CD14-positive monocyte (primary cell): ENCODE measurements at regions of chr16 and their contacts with region 1.

Region 1: DNA sequence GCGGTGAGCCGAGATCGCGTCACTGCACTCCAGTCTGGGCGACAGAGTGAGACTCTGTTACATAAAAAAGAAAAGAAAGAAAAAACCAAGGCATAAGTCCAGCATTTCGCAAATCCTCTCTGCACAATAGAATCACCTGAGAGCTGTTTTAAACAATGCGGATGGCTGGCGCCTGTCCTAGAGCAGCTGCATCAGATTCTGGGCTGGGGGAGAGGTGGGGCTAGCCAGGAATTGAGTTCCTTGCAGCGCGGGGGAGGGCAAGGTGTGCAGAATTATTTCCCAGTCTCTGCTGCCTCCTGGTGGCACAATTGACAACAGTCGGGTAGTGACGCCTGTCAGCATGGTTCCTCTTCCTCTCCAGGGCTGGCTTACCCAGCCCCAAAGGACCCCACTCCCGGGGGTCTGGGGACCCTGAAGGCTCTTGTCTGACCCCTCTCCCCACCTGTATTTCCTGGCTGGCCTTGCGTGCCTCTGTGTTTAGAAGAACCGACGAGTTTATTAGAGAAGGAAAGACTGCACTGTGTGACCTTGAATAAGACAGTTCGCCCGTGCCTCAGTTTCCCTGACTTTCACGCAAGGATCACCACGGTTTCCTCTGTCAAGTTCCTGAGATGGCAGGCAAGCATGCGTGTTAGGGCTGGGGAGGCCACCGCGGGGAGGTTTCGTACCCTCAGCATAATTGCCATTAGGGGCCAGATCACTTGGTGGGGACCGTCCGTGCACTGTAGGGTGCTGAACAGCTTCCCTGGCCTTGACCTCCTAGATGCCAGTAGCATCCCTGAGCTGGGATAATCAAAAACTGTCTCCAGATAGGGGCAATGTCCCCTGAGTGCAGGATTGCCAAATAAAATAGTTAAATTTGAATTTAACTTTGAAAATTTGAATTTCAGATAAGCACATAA is 41.0 kb upstream of the PLCG2 start:
- DNase-seq: peak; percentile 68 to 83 (median 79)
- H3K4me3 ChIP-seq: peak overlapping the region; percentile 25 to 76 (median 30)
- H3K4me3 Mint-ChIP-seq: peak overlapping the region; percentile 72 to 88
- H3K27ac ChIP-seq: peak overlapping the region; percentile 50 to 72
- H3K27ac Mint-ChIP-seq: peak overlapping the region; percentile 78 to 91 (median 88)
- H3K4me1 ChIP-seq: peaks cover 35 to 38% of the 10 kb centered on the region in 2 donors
- H3K4me1 Mint-ChIP-seq: peaks cover 40% of the 10 kb centered on the region
- H3K27me3 ChIP-seq: no peaks in the 10 kb centered on the region
- H3K27me3 Mint-ChIP-seq: peaks cover 0 to 3% (median 1%) of the 10 kb centered on the region in 3 donors
- CTCF ChIP-seq: peak; percentile 94

Region 2: DNA sequence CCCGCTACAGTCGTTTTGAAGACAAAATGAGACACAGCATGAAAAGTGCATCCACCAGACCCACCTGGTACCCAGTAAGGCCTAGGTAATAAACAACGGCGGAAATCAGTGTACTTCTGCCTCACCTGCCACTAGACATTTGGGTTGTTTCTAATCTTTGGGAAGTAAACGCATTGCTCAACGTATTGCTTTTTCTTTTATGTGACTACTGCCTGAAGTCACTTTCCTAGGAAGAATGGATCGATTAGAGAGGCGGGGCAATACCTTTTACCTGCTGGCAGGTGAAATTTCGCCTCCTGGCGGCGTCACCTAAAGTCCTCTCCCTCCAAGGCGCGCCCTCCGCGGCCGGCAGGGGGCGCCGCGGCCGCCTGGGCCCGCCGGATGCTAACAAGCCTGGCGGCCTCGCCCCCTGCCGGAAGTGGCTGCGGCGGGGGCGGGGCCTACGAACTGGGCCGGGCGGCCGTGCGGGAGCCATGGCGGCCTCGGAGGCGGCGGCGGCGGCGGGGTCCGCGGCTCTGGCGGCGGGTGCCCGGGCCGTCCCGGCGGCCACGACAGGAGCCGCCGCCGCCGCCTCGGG is 702.6 kb before region 1 on chr16 and contains the start of gene ATMIN:
- intact Hi-C with region 1: loop called in 1 of 2 experiments (anchors 10 kb)
- DNase-seq: peak; percentile 72 to 87 (median 84)
- H3K4me3 ChIP-seq: peak within 1 kb of the TSS; percentile 49 to 84 (median 73)
- H3K4me3 Mint-ChIP-seq: peak within 1 kb of the TSS; percentile 82 to 88
- H3K27ac ChIP-seq: peak within 1 kb of the TSS in 1 of 2 donors; percentile 50
- H3K27ac Mint-ChIP-seq: peak within 1 kb of the TSS in 6 of 7 donors; percentile 56 to 70 (median 62)
- H3K4me1 ChIP-seq: peaks cover 14% of the 10 kb centered on the region in 2 donors
- H3K4me1 Mint-ChIP-seq: peaks cover 23% of the 10 kb centered on the region
- H3K27me3 ChIP-seq: no peaks in the 10 kb centered on the region
- H3K27me3 Mint-ChIP-seq: no peaks in the 10 kb centered on the region
- CTCF ChIP-seq: peak; percentile 95
- polyA plus RNA-seq, gene ATMIN: 10.9 to 17.6 (median 13.2) TPM

Region 3: DNA sequence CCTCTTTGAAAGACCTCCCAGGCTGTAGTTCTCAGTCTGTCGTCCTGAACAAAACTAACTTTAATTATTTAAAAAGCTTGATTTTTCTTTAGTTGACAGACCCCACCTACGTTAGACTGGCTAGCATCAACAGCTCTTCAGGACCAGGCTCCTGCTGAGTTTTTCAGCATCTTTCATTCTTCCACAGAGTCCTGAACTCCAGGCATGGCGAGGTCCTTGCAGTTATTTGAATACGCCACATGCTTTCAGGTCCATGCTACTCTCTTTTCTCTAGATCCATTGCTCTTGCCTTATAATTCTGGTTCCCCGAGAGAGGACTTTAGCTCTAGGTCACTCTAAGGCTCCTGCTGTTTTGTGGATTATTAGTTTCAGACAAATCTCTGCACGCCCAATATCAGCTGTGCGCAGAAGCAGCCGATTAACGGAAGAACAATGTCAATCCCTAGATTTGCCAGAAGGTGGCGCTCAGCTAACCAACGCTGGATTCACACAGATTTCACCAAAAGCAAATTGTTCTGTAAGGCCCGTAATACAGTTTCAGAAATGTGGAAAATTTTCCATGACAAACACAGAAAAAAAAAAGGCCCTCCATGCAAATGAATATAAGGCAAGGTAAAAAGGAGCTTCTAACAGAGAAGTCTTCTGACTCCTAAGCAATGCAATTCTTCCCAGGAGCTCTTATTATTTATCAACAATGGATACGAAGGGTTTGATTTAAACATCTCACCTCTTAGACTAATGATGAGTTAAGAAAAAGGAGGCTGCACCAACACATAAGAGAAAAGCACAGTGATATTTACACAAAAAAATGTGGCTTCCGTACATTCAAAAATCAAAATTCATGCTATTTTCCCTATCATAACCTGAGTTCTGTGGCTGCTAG is 533.1 kb before region 1 on chr16:
- intact Hi-C with region 1: loop called (anchors 5 to 10 kb)
- DNase-seq: peak; percentile 7 to 29 (median 18)
- H3K4me3 ChIP-seq: no peak overlapping the region
- H3K4me3 Mint-ChIP-seq: no peak overlapping the region
- H3K27ac ChIP-seq: no peak overlapping the region
- H3K27ac Mint-ChIP-seq: no peak overlapping the region
- H3K4me1 ChIP-seq: no peaks in the 10 kb centered on the region
- H3K4me1 Mint-ChIP-seq: no peaks in the 10 kb centered on the region
- H3K27me3 ChIP-seq: no peaks in the 10 kb centered on the region
- H3K27me3 Mint-ChIP-seq: peaks cover 3 to 14% (median 7%) of the 10 kb centered on the region in 3 donors
- CTCF ChIP-seq: peak; percentile 78

Region 4: GRCh38 chr16:81623363-81624102 is 114.6 kb before region 1 on chr16:
- intact Hi-C with region 1: loop called (anchors 5 to 10 kb)
- DNase-seq: peak; percentile 31 to 49 (median 48)
- H3K4me3 ChIP-seq: no peak overlapping the region
- H3K4me3 Mint-ChIP-seq: no peak overlapping the region
- H3K27ac ChIP-seq: peak overlapping the region in 1 of 2 donors; percentile 38
- H3K27ac Mint-ChIP-seq: peak overlapping the region in 4 of 7 donors; percentile 30 to 75 (median 60)
- H3K4me1 ChIP-seq: no peaks in the 10 kb centered on the region
- H3K4me1 Mint-ChIP-seq: peaks cover 1% of the 10 kb centered on the region
- H3K27me3 ChIP-seq: no peaks in the 10 kb centered on the region
- H3K27me3 Mint-ChIP-seq: peaks cover 0 to 2% (median 0%) of the 10 kb centered on the region in 3 donors
- CTCF ChIP-seq: peak; percentile 66

Region 5: GRCh38 chr16:81723098-81723723 is 14.9 kb before region 1 on chr16:
- intact Hi-C with region 1: no loop called
- DNase-seq: peak; percentile 57 to 71 (median 67)
- H3K4me3 ChIP-seq: no peak overlapping the region
- H3K4me3 Mint-ChIP-seq: no peak overlapping the region
- H3K27ac ChIP-seq: no peak overlapping the region
- H3K27ac Mint-ChIP-seq: no peak overlapping the region
- H3K4me1 ChIP-seq: peaks cover 10% of the 10 kb centered on the region in 2 donors
- H3K4me1 Mint-ChIP-seq: peaks cover 14% of the 10 kb centered on the region
- H3K27me3 ChIP-seq: no peaks in the 10 kb centered on the region
- H3K27me3 Mint-ChIP-seq: peaks cover 0 to 10% (median 4%) of the 10 kb centered on the region in 3 donors
- CTCF ChIP-seq: peak; percentile 80

Region 6: DNA sequence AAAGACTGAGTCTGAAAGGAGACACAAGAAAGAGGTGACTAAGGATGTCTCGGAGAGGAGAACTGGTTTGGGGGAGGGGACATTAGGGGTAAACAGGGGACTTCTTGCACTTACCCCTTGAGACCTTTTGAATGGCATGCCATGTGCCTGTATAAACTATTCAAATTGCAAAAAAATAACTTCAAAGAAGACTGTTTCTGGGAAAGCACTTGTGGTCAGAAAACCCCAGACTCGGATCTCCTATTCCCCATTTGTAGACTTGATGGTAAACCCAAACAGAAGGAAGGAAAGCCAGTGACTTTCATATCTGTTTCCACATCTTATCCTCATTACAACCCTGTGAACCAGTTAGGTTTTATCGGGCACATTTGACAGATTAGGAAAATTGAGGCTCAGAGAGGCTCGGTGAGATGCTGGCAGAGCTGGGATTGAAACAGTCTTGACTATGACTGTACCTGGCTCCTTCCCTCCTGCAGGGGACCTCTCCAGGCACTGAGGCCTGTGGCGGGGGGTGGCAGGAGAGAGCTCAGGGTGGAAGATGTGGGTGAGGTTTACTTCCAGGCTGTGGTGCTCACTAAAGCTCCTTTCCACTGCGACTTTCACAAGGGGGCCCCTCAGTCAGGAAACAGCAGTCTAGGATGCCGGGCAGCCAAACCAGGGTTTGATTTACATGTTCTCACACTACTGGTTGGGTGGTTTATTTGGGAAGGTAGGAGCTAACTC is 10.5 kb after region 1 on chr16:
- intact Hi-C with region 1: no loop called
- DNase-seq: no peak
- H3K4me3 ChIP-seq: no peak overlapping the region
- H3K4me3 Mint-ChIP-seq: no peak overlapping the region
- H3K27ac ChIP-seq: no peak overlapping the region
- H3K27ac Mint-ChIP-seq: peak overlapping the region in 1 of 7 donors; percentile 36
- H3K4me1 ChIP-seq: peaks cover 47 to 56% of the 10 kb centered on the region in 2 donors
- H3K4me1 Mint-ChIP-seq: peaks cover 53% of the 10 kb centered on the region
- H3K27me3 ChIP-seq: no peaks in the 10 kb centered on the region
- H3K27me3 Mint-ChIP-seq: peaks cover 2 to 3% (median 3%) of the 10 kb centered on the region in 3 donors
- CTCF ChIP-seq: no peak

Region 7: DNA sequence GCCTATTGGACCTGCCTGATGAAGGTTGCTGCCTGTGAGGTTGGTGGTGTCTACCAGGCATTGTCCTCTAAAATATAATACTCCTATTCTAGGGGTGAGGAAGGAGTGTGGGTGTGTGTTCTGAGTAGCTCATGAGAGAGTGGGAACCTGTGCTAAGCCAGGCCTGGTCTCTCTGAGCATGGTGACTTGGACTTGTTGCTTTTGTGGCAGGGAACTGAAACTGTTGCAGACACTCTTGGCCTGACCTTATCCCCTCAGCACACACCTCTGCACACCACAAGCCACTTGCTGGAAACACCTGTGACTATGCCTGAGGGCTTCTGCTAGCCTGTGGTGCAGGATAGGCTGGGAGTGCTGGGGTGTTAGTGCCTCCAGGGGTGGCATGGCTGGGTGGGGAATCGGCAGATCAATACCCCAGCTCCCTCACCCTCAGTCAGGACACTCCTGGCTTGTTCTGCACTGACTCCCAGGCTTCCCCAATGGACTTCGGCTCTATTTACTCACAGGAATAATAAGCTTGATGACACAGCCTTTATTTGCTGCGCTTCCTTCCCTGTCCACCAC is 70.9 kb after region 1 on chr16:
- intact Hi-C with region 1: no loop called
- DNase-seq: no peak
- H3K4me3 ChIP-seq: no peak overlapping the region
- H3K4me3 Mint-ChIP-seq: peak overlapping the region in 1 of 2 donors; percentile 58
- H3K27ac ChIP-seq: peak overlapping the region in 1 of 2 donors; percentile 49
- H3K27ac Mint-ChIP-seq: peak overlapping the region; percentile 1 to 89 (median 38)
- H3K4me1 ChIP-seq: peaks cover 33 to 49% of the 10 kb centered on the region in 2 donors
- H3K4me1 Mint-ChIP-seq: peaks cover 76% of the 10 kb centered on the region
- H3K27me3 ChIP-seq: no peaks in the 10 kb centered on the region
- H3K27me3 Mint-ChIP-seq: peaks cover 0 to 2% (median 0%) of the 10 kb centered on the region in 3 donors
- CTCF ChIP-seq: no peak

Region 8: DNA sequence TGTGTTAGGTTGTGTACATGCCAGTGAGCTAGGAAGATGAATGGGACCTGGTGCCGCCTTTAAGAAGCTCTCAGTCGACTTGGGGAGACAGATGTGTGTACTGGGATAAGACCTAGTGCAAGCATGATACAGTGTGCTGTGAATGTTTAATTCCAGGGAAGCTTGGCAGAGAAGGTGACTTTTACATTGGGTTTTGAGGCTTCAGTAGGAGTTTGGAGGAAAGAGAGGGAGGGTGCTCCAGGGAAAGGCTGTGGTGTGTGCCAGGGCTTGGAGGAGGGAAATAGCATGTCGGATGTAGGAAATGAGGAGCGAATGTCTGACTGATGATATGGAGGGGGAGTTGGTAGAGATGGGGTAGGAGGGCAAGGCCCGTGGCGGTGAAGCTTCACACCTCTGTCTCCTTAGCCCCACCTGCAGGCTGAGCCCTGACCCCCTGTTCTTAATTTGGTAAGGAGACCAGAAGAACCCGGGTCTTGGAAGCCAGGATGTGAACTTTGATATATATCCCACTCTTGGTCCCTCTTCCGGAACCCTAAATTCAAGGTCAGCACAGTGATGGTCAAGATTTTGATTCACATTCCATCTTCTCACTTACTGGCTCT is 117.5 kb after region 1 on chr16:
- intact Hi-C with region 1: no loop called
- DNase-seq: no peak
- H3K4me3 ChIP-seq: no peak overlapping the region
- H3K4me3 Mint-ChIP-seq: no peak overlapping the region
- H3K27ac ChIP-seq: no peak overlapping the region
- H3K27ac Mint-ChIP-seq: peak overlapping the region in 3 of 7 donors; percentile 2 to 62 (median 15)
- H3K4me1 ChIP-seq: no peaks in the 10 kb centered on the region
- H3K4me1 Mint-ChIP-seq: peaks cover 8% of the 10 kb centered on the region
- H3K27me3 ChIP-seq: no peaks in the 10 kb centered on the region
- H3K27me3 Mint-ChIP-seq: peaks cover 0 to 2% (median 0%) of the 10 kb centered on the region in 3 donors
- CTCF ChIP-seq: no peak

Region 9: GRCh38 chr16:81873843-81874752 is 136.0 kb after region 1 on chr16:
- intact Hi-C with region 1: loop called in 1 of 2 experiments (anchors 5 kb)
- DNase-seq: peak; percentile 49 to 66 (median 53)
- H3K4me3 ChIP-seq: no peak overlapping the region
- H3K4me3 Mint-ChIP-seq: no peak overlapping the region
- H3K27ac ChIP-seq: peak overlapping the region in 1 of 2 donors; percentile 16
- H3K27ac Mint-ChIP-seq: peak overlapping the region in 4 of 7 donors; percentile 15 to 82 (median 54)
- H3K4me1 ChIP-seq: peaks cover 0 to 5% of the 10 kb centered on the region in 2 donors
- H3K4me1 Mint-ChIP-seq: peaks cover 4% of the 10 kb centered on the region
- H3K27me3 ChIP-seq: no peaks in the 10 kb centered on the region
- H3K27me3 Mint-ChIP-seq: no peaks in the 10 kb centered on the region
- CTCF ChIP-seq: peak; percentile 96